Activated CD4-positive, alpha-beta memory T cell treated with anti-CD3 and anti-CD28 coated beads for 36 hours (primary cell): ENCODE measurements at regions of chr12 and their contacts with region 1.

Region 1: DNA sequence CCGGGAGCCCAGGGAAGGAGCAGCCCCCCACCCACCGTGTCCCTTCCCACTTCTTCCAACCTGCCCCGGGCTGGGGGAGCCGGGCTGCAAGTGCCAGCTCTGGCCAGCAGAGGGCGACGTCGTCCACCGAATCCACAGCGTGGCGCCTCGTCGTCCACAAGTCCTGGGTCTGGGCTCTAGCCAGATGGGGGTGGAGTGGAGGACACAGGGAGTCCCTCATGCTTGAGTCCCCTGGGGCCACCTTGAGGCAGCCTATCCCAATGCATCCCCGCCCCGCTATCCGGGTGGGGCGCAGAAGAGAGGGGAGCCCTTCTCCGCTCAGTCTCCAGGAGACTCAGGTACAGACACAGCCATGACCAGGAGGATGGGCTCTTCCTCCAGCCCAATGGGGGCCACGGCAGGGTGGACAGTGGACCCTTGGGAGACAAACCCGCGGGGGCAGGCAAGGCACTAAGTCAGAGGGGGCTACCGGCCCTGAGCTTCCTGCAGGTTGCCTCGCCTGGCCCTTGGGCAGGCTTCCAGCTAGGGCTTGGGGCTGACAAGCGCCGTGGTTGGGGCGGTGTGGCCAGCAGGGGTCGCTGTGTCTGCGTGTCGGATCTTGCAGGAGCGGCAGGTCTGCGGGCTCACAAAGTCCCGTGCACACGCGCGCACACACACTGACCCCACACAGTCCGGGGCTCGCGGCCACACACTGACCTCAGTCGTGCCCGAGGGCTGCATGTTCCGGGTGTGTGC is 5.5 kb downstream of the AQP5 start:
- DNase-seq: peak; percentile 94
- H3K4me3 Mint-ChIP-seq: peak overlapping the region; percentile 51
- H3K27ac Mint-ChIP-seq: no peak overlapping the region
- H3K4me1 Mint-ChIP-seq: peaks cover 2% of the 10 kb centered on the region
- H3K27me3 Mint-ChIP-seq: peaks cover 32% of the 10 kb centered on the region

Region 2: DNA sequence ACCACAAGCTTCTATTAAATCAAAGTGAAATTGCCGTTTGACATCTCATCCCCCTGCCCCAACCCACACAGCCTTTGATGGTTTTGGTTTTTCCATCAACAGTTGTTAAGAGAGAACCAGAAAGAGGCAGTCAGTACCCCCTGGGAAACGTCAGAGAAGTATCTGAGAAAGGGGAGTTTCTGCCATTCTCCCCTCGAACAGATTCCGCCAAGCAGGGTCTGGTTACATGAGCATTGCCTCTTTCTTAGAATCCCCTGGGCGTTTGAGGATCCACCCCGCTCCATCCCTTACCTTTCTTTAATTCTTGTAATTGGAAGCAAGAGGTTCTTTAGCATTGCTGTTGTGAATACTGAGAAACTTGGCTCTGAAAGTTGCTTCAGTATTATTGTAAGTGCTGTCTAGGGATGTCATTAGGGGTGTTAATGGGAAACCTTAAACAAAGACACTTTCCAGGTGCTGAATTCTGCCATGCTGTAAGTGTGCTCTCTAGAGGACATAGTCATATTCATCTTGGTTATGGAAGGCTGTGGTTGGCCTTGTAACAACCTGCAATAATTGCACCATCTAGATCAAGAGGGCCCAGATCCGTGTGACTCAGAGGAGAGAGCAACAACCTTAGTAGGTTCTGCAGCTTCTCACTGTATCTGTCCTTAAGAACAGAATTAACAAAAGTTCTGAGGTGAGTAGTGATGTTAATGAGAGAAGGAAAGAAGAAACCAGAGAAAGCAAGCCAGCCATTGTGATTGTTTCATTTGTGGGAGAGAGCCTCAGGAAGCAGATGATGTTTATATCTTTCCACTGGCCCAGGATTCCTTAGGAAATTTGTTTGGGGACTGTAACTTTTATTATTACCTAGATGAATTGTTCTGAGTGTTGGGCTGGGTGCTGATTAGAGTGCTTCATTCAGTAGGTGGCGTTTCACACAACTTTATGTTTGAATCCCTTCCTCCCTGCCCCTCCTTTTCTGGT is 216.9 kb before region 1 on chr12:
- CTCF ChIA-PET with region 1: no interaction called
- POLR2A ChIA-PET with region 1: no interaction called
- intact Hi-C with region 1: no loop called
- DNase-seq: peak; percentile 77
- H3K4me3 Mint-ChIP-seq: peak overlapping the region; percentile 54
- H3K27ac Mint-ChIP-seq: peak overlapping the region; percentile 92
- H3K4me1 Mint-ChIP-seq: peaks cover 86% of the 10 kb centered on the region
- H3K27me3 Mint-ChIP-seq: no peaks in the 10 kb centered on the region

Region 3: DNA sequence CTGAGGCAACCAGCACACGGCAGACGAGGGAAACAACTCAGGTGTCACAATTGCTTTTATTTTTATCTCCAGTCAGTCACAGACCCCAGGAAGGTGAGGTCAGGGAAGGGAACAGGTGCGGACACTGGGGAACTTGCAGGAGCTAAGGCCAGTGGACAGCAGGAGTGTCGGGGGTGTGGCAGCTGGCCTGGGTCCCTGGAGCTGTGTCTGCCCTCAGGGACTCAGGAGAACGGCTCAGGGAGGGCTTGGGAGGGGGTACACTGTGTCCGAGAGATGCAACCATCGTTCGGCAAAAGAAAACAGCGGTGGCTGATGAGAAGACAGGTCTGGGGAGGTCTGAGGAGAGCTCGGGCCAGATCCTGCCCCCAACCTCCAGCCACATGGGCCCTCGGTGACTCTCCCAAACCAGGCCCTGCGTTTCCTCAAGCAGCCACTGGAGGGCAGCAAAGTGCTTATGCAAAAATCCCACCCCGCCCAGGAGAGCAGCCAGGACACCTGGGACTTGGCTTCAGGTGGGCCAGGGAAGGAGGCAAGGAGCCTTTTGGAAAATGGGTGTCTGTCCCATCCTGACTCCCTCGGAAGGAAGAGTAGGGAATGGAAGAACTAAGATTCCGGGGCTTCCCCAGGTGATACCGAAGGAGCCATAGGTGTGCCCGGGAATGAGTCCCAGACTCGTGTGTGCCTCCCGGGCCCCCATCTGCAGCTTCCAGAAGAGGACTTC is 100.2 kb before region 1 on chr12:
- CTCF ChIA-PET with region 1: interaction called, 56 read pairs
- POLR2A ChIA-PET with region 1: no interaction called
- intact Hi-C with region 1: loop called (anchors 2 kb)
- DNase-seq: peak; percentile 83
- H3K4me3 Mint-ChIP-seq: no peak overlapping the region
- H3K27ac Mint-ChIP-seq: no peak overlapping the region
- H3K4me1 Mint-ChIP-seq: no peaks in the 10 kb centered on the region
- H3K27me3 Mint-ChIP-seq: no peaks in the 10 kb centered on the region

Region 4: GRCh38 chr12:49945394-49946080 is 21.7 kb before region 1 on chr12:
- CTCF ChIA-PET with region 1: interaction called, 95 read pairs
- POLR2A ChIA-PET with region 1: no interaction called
- intact Hi-C with region 1: no loop called
- DNase-seq: peak; percentile 93
- H3K4me3 Mint-ChIP-seq: peak overlapping the region; percentile 70
- H3K27ac Mint-ChIP-seq: peak overlapping the region; percentile 81
- H3K4me1 Mint-ChIP-seq: peaks cover 33% of the 10 kb centered on the region
- H3K27me3 Mint-ChIP-seq: no peaks in the 10 kb centered on the region

Region 5: DNA sequence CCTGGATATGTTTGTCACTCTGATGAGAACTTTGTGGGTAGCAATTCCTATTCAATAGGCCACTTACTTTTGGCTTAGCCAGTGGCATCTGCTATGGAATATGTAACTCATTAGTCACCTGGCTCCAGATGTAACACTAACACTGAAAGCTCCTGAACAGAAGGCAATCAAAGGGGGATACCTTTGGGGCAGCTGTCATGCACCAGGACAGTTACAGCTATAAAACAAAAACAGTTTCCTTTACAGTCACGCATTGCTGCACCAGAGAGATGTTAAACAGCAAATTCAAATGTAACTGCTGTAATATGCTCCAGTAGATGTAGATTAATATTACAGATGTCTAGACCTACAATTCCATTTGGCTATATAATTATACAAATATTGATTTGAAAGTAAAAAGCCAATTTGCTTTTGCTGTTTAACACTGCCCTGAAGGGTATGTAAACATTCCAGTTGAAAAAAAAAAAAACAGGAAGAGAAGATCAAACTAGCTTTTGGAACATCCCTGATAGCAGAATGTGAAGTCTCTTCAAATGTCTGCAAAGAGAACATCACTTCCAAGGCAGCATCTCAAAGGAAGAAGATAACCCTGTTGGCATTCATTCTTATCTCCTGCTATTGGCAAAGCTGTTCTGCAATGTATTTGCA is 39.7 kb after region 1 on chr12:
- CTCF ChIA-PET with region 1: interaction called, 10 read pairs
- POLR2A ChIA-PET with region 1: no interaction called
- intact Hi-C with region 1: no loop called
- DNase-seq: no peak
- H3K4me3 Mint-ChIP-seq: no peak overlapping the region
- H3K27ac Mint-ChIP-seq: no peak overlapping the region
- H3K4me1 Mint-ChIP-seq: peaks cover 11% of the 10 kb centered on the region
- H3K27me3 Mint-ChIP-seq: no peaks in the 10 kb centered on the region

Region 6: DNA sequence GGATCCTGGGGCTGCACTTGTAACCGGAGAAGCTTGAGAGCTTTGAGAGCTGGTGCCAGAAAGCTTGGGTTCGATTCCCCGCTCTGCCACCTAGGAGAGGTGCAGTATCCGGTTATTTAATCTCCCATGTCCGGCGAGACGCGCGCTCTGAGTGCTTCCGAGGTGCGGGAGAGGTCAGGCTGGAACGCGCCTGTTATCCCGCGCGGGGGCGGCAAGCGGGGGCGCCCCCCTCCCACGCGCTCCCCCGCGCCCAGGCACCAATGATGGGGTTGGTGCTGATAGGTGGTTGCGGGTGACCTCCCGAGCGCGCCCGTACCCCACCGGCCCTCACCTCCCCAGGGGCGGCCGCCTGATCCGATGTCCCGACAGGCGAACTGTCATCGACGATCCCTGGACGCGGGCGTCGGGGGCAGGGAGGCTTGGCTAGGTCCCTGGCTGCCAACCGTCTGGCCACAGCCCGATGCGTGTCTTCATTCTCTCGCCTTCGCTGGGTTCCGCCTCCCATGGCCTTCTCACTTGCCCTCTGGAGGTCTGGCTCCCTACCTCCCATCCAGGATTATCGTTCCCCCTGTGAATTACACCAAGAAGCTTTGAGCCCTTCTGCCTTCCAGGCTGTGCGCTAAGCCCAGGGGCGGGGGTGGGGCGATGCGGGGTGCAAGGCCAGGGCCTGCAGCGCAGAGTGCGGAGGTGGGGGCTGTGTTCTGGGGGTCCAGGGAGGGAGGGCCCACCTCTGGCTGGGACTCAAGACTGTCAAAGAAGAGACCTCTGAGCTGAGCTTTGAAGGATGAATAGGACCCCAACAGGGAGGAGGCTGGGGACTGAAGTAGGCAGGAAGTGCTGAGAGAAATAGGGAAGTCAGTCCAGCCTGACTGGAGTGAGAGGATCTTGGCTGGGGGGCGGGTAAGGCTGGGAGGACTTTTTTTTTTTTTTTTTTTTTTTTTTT is 65.7 kb after region 1 on chr12:
- CTCF ChIA-PET with region 1: interaction called, 72 read pairs
- POLR2A ChIA-PET with region 1: no interaction called
- intact Hi-C with region 1: no loop called
- DNase-seq: no peak
- H3K4me3 Mint-ChIP-seq: no peak overlapping the region
- H3K27ac Mint-ChIP-seq: no peak overlapping the region
- H3K4me1 Mint-ChIP-seq: no peaks in the 10 kb centered on the region
- H3K27me3 Mint-ChIP-seq: peaks cover 12% of the 10 kb centered on the region

Region 7: DNA sequence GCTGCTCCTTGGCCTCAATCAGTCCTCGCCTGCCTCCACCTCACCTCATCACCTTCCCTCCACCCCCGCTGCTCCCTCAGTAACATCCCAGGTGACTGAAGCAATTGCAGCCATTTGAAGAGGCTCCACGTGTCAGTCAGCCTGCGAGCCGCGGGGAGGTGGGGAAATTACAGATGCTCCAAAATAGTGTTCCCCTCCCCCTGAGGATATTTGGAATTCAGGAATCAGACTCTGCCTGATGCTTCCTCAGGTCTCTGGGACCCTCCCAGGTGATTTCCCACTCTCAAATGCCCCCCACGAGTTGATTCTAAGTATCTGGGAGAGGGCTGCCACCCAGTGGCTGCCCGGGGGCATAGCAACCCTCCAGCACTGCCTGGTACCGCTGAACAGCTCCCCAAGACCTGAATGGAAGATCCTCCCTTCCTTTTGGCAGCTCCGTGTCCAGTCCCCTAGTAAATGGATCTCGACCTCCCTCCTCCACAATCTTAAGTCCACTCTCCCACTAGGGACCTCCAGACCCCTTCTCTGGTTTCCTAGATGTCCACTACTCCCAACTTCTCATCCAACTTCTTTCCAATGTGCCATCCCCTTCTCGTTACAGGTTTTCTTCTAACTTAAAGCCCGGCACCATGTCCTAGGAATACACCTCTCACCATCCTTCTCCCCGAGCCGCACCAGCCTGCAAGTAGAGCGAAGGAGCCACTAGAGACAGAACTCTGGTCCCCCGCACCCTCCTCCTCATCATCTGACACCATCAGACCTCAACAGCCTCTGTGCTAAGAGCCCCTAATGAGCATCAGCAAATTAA is 88.8 kb after region 1 on chr12:
- CTCF ChIA-PET with region 1: interaction called, 259 read pairs
- POLR2A ChIA-PET with region 1: interaction called, 3 read pairs
- intact Hi-C with region 1: loop called (anchors 1 kb)
- DNase-seq: peak; percentile 71
- H3K4me3 Mint-ChIP-seq: peak overlapping the region; percentile 31
- H3K27ac Mint-ChIP-seq: no peak overlapping the region
- H3K4me1 Mint-ChIP-seq: peaks cover 24% of the 10 kb centered on the region
- H3K27me3 Mint-ChIP-seq: peaks cover 48% of the 10 kb centered on the region